OCI-LY7 (cell line): ENCODE measurements at regions of chr21 and their contacts with region 1.

Region 1: DNA sequence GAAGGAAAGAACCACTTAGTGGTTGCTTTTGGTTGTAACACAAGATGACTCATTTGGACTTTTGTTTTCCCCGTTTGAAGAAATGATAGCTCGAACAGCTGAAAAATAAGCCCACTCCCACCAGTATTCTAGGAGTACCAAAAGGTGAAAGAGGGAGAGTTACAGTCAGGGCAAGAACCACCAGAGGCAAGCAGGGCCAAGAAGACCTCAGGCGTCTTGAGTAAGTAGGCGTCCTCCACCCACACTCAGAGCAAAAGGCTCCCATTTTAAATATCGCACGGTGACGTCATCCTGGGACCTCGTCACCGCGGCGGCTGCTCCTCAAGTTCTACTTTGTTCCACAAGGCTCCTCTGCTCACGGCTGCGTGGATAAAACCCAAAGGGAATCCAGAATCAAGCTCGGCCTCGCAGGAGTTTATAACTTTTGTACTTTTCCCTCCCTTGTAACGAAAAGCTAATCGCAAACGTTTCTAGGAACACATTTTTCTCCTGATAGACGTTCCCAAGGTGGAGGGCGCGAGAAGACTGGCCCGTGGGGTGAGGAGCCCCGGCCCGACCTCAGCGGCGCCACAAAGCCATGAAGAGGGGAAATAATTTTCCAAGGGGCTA is 1.2 kb downstream of the BTG3 start:
- DNase-seq: peak; percentile 85
- H3K4me3 ChIP-seq: peak overlapping the region; percentile 92
- H3K27ac ChIP-seq: peak overlapping the region; percentile 48
- H3K4me1 ChIP-seq: peaks cover 30% of the 10 kb centered on the region
- CTCF ChIP-seq: no peak

Region 2: GRCh38 chr21:17512253-17513213 is 99.0 kb before region 1 on chr21 and contains the start of gene CXADR:
- CTCF ChIA-PET with region 1: no interaction called
- POLR2A ChIA-PET with region 1: interaction called, 3 read pairs
- intact Hi-C with region 1: loop called (anchors 2 kb)
- DNase-seq: peak; percentile 93
- H3K4me3 ChIP-seq: peak within 1 kb of the TSS; percentile 88
- H3K27ac ChIP-seq: peak within 1 kb of the TSS; percentile 35
- H3K4me1 ChIP-seq: peaks cover 19% of the 10 kb centered on the region
- CTCF ChIP-seq: peak; percentile 68
- total RNA-seq, gene CXADR: 6.3 and 6.7 TPM in 2 replicates

Region 3: DNA sequence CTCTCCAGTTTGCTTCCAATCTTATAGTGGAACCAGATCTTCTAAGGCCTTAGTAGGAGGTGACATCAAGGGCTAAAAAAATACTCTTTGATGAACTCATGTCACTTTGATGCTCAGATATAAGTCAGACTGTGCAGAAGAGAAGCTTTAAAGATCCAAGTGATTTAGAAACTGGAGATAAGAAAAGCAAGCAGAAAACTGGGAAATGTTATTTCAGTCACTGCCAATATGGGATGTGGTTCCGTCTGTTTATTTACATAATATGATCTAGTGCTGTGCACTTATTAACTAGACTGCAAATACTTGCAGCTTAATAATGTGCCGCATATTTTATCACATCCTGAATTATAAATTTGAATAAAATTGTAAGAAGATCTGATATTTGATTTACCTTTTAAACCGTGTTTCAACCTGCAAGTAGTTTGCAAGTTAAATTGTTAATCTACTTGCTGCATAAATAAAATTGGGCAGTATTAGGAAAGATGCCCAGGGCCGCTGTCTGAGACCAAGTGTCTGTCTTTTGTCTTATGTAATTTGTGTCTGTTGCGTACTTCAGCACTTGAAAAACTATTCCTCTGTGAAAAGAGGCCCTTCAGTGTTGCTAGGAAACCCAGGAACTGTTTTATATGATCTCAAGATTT is 69.0 kb before region 1 on chr21:
- CTCF ChIA-PET with region 1: no interaction called
- POLR2A ChIA-PET with region 1: no interaction called
- intact Hi-C with region 1: no loop called
- DNase-seq: no peak
- H3K4me3 ChIP-seq: no peak overlapping the region
- H3K27ac ChIP-seq: no peak overlapping the region
- H3K4me1 ChIP-seq: peaks cover 16% of the 10 kb centered on the region
- CTCF ChIP-seq: no peak

Region 4: GRCh38 chr21:17598437-17598836 is 13.1 kb before region 1 on chr21:
- CTCF ChIA-PET with region 1: no interaction called
- POLR2A ChIA-PET with region 1: interaction called, 30 read pairs
- intact Hi-C with region 1: no loop called
- DNase-seq: peak; percentile 14
- H3K4me3 ChIP-seq: no peak overlapping the region
- H3K27ac ChIP-seq: no peak overlapping the region
- H3K4me1 ChIP-seq: peaks cover 11% of the 10 kb centered on the region
- CTCF ChIP-seq: no peak

Region 5: DNA sequence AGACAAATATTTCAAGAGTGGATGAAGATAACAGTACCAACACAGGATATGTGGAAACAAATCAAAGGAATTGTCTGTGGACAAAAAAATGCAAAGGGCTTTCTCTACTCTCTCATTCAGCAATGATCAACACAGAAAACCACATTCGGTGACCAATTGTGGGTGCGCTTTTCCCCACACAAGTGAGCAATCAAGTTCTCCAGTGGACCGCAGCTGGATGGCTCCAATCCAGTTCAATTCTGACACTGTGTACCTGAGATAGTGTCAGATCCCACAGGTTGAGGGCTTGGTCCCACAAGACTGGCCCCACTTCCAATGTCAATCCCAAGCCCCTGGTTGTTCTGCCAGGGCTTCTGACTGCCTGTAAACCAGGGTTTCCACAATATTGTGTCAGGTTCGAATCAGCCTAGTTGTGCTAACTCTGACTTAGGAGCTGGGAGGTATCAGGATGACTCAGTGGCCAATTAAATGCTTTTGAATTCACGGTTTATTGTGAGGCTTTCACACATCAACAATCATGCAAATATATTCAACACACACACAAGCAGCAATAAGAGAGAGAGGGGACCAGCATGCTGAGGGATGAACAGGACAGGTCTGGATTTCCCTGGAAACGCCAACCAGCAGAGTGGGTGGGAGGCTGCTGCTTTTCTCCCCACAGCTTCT is 88.1 kb after region 1 on chr21:
- CTCF ChIA-PET with region 1: no interaction called
- POLR2A ChIA-PET with region 1: no interaction called
- intact Hi-C with region 1: no loop called
- DNase-seq: no peak
- H3K4me3 ChIP-seq: no peak overlapping the region
- H3K27ac ChIP-seq: no peak overlapping the region
- H3K4me1 ChIP-seq: no peaks in the 10 kb centered on the region
- CTCF ChIP-seq: no peak